Activated CD4-positive, alpha-beta T cell treated with anti-CD3 and anti-CD28 coated beads, Interleukin-2, amount 10 ng/mL, durations not matched to agents 7 days and 5 days (primary cell): ENCODE measurements at regions of chr17 and their contacts with region 1.

Region 1: DNA sequence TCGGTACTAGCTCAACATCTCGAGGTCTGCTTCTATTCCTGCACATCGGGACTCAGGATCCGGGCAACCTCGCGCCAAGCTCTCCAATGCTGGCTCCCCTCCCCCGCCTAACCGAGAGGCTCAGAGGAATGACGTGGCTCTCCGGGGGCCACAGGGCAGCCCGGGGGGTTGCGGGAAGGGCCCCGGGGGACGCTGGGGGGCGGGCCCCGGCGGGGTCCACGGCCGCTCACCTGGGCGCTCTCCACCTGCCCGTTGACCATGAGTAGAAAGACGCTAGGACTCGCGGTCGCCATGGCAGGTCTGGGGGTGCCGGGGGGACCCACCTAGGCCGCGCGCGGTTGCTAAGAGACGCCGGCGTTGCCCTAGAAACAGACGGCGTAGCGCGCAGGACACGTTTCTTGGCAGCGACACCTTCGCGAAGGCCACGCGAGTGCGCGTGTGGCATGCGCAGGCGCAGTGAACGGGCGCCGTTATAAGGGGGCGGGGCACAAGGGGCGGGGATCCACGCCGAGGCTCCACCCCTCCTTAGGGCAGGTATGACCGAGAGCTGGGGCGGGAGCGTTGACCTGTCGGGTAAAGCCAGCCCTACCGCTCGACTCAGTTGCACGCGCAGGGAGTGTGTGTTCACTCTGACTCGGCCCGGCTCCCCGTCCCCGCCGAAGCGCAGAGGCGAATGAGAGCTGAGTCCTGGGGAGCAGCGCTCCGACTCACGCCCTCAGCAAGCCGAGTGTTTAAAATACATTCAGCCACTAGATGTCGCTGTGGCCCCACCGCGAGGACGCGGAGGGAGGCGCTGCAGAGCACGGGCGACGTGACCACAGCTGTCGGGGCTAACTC is at the start of gene B9D1:
- DNase-seq: peak; percentile 92
- H3K4me3 Mint-ChIP-seq: peak within 1 kb of the TSS; percentile 84
- H3K27ac Mint-ChIP-seq: peak within 1 kb of the TSS; percentile 85
- H3K4me1 Mint-ChIP-seq: peaks cover 22% of the 10 kb centered on the region
- H3K27me3 Mint-ChIP-seq: peaks cover 12% of the 10 kb centered on the region
- total RNA-seq, gene B9D1: 1.3 to 1.6 TPM

Region 2: GRCh38 chr17:19003543-19004420 is 358.7 kb before region 1 on chr17:
- CTCF ChIA-PET with region 1: no interaction called
- POLR2A ChIA-PET with region 1: no interaction called
- DNase-seq: peak; percentile 26
- H3K4me3 Mint-ChIP-seq: peak overlapping the region; percentile 86
- H3K27ac Mint-ChIP-seq: peak overlapping the region; percentile 86
- H3K4me1 Mint-ChIP-seq: peaks cover 34% of the 10 kb centered on the region
- H3K27me3 Mint-ChIP-seq: peaks cover 7% of the 10 kb centered on the region

Region 3: GRCh38 chr17:19377602-19378392 is 15.3 kb after region 1 on chr17:
- CTCF ChIA-PET with region 1: interaction called, 37 read pairs
- POLR2A ChIA-PET with region 1: interaction called, 3 read pairs
- DNase-seq: peak; percentile 97
- H3K4me3 Mint-ChIP-seq: peak overlapping the region; percentile 97
- H3K27ac Mint-ChIP-seq: peak overlapping the region; percentile 98
- H3K4me1 Mint-ChIP-seq: peaks cover 30% of the 10 kb centered on the region
- H3K27me3 Mint-ChIP-seq: no peaks in the 10 kb centered on the region

Region 4: GRCh38 chr17:19447085-19447583 is 84.6 kb after region 1 on chr17:
- CTCF ChIA-PET with region 1: interaction called, 18 read pairs
- POLR2A ChIA-PET with region 1: no interaction called
- DNase-seq: peak; percentile 80
- H3K4me3 Mint-ChIP-seq: no peak overlapping the region
- H3K27ac Mint-ChIP-seq: no peak overlapping the region
- H3K4me1 Mint-ChIP-seq: peaks cover 3% of the 10 kb centered on the region
- H3K27me3 Mint-ChIP-seq: peaks cover 19% of the 10 kb centered on the region